ENCODE measurements at regions of chr3 and their contacts with region 1.

Region 1: DNA sequence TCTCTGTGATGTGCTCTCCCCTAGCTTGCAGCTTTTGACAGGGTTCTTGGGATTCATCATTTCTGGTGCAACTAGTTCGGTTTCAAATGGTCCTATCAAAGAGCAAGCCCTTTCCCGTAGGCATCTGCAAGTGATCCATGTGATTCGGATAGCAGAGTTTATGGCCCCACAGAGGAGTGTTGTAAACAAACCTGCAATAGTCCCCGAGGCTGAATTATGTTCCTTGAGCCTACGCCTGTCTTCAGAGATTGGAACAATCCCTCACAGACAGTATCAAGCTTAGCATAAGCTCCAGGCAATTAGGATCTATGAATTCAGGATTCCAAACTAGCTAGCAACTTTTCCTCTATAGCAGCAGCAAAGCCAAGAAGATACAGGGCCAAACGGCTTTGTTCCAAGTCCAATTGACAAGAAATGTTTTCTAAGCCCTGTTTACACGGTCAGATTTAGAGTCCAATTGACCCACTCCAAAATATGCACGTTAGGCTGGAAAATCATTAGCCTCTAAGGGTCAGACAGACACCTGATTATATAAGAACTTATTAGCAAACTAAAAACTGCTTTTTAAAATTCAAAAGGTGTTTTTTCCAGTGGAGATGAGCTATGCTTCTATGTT is 24.8 kb downstream of the LNP1 start:
- DNase-seq: no peak
- H3K27ac ChIP-seq: no peak overlapping the region
- CTCF ChIP-seq: no peak

Region 2: DNA sequence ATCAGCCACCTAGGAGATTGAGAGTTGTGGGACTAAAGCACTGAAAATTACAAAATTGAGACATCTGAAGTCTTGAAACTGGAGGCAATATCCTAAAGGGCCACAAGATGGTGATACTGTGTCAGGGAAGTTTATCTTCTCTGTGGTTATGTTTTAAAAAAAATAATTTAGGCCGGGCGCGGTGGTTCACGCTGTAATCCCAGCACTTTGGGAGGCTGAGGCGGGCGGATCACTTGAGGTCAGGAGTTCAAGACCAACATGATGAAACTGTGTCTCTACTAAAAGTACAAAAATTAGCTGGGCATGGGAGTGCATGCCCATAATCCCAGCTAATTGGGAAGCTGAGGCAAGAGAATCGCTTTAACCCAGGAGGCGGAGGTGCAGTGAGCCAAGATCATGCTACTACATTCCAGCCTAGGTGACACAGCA is 109.5 kb before region 1 on chr3:
- CTCF ChIA-PET with region 1: no interaction called
- POLR2A ChIA-PET with region 1: interaction called, 10 read pairs
- DNase-seq: peak; percentile 45
- H3K27ac ChIP-seq: no peak overlapping the region
- CTCF ChIP-seq: peak; percentile 70

Measured in RWPE1 (cell line).